Esophagus muscularis mucosa (tissue), 4 donors: ENCODE measurements at regions of chr4 and their contacts with region 1.

Region 1: GRCh38 chr4:77044461-77045150 is 31.2 kb downstream of the CCNI start:
- DNase-seq: no peak
- H3K4me3 ChIP-seq: no peak overlapping the region
- H3K27ac ChIP-seq: peak overlapping the region in 2 of 4 donors; percentile 22 to 24
- H3K4me1 ChIP-seq: peaks cover 0 to 14% (median 9%) of the 10 kb centered on the region in 4 donors
- H3K27me3 ChIP-seq: no peaks in the 10 kb centered on the region
- CTCF ChIP-seq: peak; percentile 48 to 61 (median 59)
- EP300 ChIP-seq: no peak
- POLR2A ChIP-seq: no peak

Region 2: DNA sequence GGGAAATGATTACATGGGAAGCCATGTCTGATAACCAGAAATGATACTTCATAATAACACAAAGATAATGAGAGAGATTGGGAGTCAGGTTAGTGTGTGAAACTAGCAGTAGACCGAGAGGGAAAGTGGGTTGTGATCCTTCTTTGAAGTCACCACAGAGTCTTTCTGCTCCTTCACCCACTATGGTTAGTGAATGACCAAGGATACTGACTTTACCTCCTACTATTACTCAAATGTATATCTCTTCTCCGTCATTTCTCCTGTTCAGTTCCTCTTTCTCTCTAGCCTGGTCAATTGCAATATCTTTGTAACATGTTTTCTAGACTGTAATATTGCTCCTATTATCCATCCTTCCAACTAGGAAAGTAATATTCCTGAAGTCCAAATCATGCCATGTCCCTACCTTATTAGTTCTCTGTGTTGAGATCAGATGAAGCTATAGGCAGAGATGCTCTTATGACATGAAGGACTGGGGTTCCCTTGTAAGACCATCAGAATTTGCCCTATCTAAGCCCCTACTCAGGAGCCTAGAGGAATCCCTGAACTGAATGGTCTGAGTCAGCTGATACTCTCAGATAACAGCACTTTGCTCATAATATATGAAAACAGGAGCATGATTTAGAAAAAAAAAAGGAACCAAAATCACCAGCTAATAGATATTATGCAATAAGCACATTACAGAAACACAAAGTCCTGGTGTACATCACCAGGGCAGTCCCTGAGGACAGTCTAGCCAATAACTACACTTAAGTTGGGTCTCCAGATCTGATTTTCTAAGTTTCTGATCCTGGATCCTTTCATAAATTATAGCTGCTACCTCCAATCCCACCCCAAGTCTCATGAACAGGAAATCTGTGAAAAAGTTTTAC is 528.4 kb before region 1 on chr4:
- intact Hi-C with region 1: loop called (anchors 5 kb)
- DNase-seq: no peak
- H3K4me3 ChIP-seq: no peak overlapping the region
- H3K27ac ChIP-seq: no peak overlapping the region
- H3K4me1 ChIP-seq: peaks cover 0 to 23% (median 14%) of the 10 kb centered on the region in 4 donors
- H3K27me3 ChIP-seq: no peaks in the 10 kb centered on the region
- CTCF ChIP-seq: no peak
- EP300 ChIP-seq: no peak
- POLR2A ChIP-seq: no peak

Region 3: GRCh38 chr4:76765473-76766183 is 279.0 kb before region 1 on chr4:
- intact Hi-C with region 1: loop called (anchors 10 kb)
- DNase-seq: no peak
- H3K4me3 ChIP-seq: no peak overlapping the region
- H3K27ac ChIP-seq: peak overlapping the region; percentile 28 to 66 (median 56)
- H3K4me1 ChIP-seq: peaks cover 0 to 48% (median 37%) of the 10 kb centered on the region in 4 donors
- H3K27me3 ChIP-seq: no peaks in the 10 kb centered on the region
- CTCF ChIP-seq: no peak
- EP300 ChIP-seq: no peak
- POLR2A ChIP-seq: no peak

Region 4: DNA sequence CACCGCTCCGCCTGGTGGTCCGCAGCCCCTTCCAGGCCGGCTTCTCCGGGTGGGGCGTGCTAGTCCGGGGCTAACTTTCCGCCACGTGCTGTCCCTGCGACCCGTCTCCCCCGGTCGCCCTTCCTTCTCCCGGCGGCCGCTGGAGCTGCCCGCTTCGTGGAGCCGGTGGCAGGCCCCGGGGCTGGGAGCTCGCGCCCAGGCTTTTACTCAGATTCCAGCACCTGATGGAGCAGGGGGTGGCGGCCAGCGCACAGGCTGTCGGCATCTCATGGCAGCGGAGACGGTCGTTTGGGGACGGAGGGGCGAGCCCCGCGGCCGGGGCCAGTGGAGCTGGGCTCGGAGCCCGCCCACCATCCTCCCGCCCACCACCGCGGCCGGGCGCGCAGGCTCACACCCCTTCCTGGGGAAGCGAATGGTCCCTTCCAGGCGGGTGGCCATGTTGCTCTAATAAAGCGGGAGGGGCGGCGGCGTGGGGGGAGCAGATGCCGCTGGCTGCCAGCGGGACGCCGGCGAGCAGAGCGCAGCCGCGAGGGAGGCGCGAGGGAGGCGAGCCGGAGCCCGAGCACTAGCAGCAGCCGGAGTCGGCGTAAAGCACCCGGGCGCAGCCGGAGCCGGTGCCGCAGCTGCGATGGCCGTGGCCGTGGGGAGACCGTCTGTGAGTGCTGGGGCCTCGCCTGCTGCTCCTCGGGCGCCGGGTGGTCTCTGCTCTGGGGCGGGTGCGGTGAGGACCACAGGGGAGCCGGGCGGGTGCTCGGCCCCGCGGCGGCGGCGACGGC is 95.1 kb before region 1 on chr4 and contains the start of gene SEPTIN11:
- intact Hi-C with region 1: loop called (anchors 10 kb)
- DNase-seq: peak; percentile 95
- H3K4me3 ChIP-seq: peak within 1 kb of the TSS; percentile 71 to 92 (median 83)
- H3K27ac ChIP-seq: peak within 1 kb of the TSS; percentile 90 to 96 (median 92)
- H3K4me1 ChIP-seq: peaks cover 5 to 41% (median 35%) of the 10 kb centered on the region in 4 donors
- H3K27me3 ChIP-seq: no peaks in the 10 kb centered on the region
- CTCF ChIP-seq: no peak
- EP300 ChIP-seq: no peak
- POLR2A ChIP-seq: peak; percentile 75
- total RNA-seq, gene SEPTIN11: 74.1 to 144 (median 86.9) TPM

Region 5: DNA sequence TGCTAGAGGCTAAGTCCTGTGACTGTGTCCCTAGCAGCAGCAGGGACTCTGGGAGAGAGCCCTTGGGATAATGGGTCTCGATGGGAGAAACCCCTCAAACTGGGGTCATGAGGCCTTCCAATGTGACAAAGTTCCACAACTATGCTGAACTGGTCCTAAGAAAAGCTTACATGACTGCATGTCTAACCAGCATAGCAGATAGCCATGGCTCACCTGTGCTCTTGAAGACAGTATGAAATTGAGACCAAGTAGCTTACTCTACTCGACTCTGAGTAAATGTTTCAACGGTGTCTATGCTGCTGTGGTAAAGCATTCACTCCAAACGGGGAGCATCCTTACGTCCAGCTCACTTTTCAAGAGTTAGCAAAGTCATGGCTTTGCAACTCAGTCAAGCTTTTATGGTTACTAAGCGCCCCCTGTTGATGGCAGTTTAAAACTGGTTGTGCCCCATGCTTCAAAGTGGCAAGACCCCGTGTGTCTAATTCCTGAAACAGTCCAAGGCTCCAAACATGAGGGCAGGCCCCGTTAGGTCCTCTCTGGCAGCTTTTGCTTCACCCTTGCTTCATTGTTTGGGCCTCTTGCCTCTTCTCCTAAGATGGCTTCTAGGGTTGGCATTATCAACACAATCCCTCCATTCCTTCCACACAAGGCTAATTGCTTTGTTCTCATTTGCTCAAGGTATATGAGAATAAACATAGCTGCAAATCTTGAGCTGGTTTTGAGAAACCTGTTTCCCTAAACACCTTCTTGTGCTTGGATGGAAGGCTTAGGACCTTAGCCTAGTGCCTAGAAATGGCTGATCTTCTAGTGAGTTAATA is 159.0 kb after region 1 on chr4:
- intact Hi-C with region 1: loop called (anchors 2 kb)
- DNase-seq: no peak
- H3K4me3 ChIP-seq: no peak overlapping the region
- H3K27ac ChIP-seq: no peak overlapping the region
- H3K4me1 ChIP-seq: peaks cover 0 to 5% (median 3%) of the 10 kb centered on the region in 4 donors
- H3K27me3 ChIP-seq: no peaks in the 10 kb centered on the region
- CTCF ChIP-seq: peak; percentile 66 to 81 (median 75)
- EP300 ChIP-seq: no peak
- POLR2A ChIP-seq: no peak

Region 6: DNA sequence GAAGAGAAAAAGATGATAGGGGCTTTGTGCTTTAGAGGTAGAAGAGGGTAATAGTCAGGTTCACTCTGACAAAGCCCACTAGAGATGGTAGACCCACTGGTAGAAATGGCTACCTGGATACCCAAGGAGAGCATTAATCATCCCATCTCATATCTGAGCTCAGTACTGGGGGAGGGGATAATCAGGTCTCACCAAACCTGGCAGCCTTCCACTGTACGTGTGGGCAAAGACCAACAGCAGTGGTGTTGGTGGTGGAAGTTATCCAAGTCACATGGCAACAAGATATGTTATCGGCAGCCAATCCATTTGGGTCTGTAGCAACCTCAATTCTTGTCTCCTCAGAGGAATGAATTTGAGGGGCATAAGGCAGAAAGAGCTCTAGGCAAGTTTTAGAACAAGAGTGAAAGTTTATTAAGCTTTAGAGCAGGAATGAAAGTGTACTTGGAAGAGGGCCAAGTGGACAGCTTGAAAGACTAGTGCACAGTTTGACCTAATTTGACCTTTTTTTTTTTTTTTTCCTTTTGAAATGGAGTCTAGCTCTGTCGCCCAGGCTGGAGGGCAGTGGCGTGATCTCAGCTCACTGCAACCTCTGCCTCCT is 494.1 kb after region 1 on chr4:
- intact Hi-C with region 1: no loop called
- DNase-seq: no peak
- H3K4me3 ChIP-seq: no peak overlapping the region
- H3K27ac ChIP-seq: no peak overlapping the region
- H3K4me1 ChIP-seq: peaks cover 0 to 18% (median 14%) of the 10 kb centered on the region in 4 donors
- H3K27me3 ChIP-seq: no peaks in the 10 kb centered on the region
- CTCF ChIP-seq: no peak
- EP300 ChIP-seq: no peak
- POLR2A ChIP-seq: no peak